Gastrocnemius medialis (tissue), 4 donors: ENCODE measurements at regions of chr6 and their contacts with region 1.

Region 1: GRCh38 chr6:90098001-90098531 is 198.6 kb downstream of the BACH2 start:
- DNase-seq: peak; percentile 60 to 87
- ATAC-seq: peak; percentile 85
- H3K4me3 ChIP-seq: no peak overlapping the region
- H3K27ac ChIP-seq: peak overlapping the region; percentile 62 to 82 (median 70)
- H3K4me1 ChIP-seq: peaks cover 38 to 46% of the 10 kb centered on the region in 2 donors
- H3K27me3 ChIP-seq: no peaks in the 10 kb centered on the region
- CTCF ChIP-seq: peak in 2 of 5 experiments; percentile 31 to 39
- POLR2A ChIP-seq: no peak

Region 2: GRCh38 chr6:89940225-89941027 is 157.6 kb before region 1 on chr6:
- in situ Hi-C with region 1: no loop called
- intact Hi-C with region 1: loop called (anchors 10 kb)
- DNase-seq: peak; percentile 70 to 80
- ATAC-seq: peak; percentile 94 to 95
- H3K4me3 ChIP-seq: no peak overlapping the region
- H3K27ac ChIP-seq: peak overlapping the region; percentile 18 to 60 (median 47)
- H3K4me1 ChIP-seq: peaks cover 25 to 27% of the 10 kb centered on the region in 2 donors
- H3K27me3 ChIP-seq: no peaks in the 10 kb centered on the region
- CTCF ChIP-seq: peak; percentile 63 to 74 (median 73)
- POLR2A ChIP-seq: no peak

Region 3: DNA sequence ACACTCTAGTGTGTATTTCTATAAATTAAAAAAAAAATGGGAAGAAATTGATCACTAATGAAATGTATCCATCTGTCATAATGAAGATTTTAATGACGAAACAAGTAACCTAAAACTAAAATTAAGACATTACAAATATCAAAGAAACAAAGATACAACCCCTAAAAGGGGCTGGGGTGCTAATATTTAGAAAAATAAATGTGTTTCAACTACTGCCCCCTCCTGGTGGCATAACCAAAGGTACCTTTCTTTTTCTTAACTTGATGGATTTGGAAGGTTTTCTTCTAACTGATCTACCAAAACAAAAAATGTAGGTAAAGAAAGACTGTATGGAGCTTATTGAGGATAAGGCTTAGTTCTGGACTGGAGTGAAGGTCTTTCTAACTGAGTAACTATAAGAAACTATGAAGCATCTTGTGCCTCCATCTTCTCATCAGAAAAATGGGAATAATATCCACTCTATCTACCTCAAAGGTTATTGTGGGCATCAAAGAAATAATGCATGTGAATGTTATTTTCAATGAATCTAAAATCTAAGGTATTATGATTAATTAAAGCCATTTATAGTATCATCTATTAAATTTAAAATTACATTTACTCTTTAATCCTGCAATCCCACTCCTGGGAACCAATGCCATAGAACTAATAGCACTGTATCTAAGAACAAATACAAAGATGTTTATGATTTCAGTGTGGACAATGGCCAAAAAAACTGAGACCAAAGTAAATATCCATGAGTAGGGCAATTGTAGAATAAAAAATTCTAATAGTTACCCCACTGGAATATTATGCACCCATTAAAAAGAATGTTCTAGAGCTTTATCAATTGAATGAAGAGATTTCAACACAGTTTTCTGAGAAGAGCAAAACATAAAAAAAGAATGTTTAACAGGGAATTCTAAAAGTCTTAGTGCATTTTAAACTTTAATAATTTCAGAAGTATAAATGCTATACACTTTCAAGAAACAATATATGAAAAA is 81.4 kb after region 1 on chr6:
- in situ Hi-C with region 1: no loop called
- intact Hi-C with region 1: loop called (anchors 5 kb)
- DNase-seq: no peak
- ATAC-seq: no peak
- H3K4me3 ChIP-seq: no peak overlapping the region
- H3K27ac ChIP-seq: no peak overlapping the region
- H3K4me1 ChIP-seq: peaks cover 40% of the 10 kb centered on the region in 2 donors
- H3K27me3 ChIP-seq: no peaks in the 10 kb centered on the region
- CTCF ChIP-seq: peak in 1 of 5 experiments; percentile 31
- POLR2A ChIP-seq: no peak

Region 4: GRCh38 chr6:90216072-90216977 is 118.3 kb after region 1 on chr6:
- in situ Hi-C with region 1: no loop called
- intact Hi-C with region 1: loop called (anchors 1 kb)
- DNase-seq: peak in 1 of 2 donors; percentile 36
- ATAC-seq: no peak
- H3K4me3 ChIP-seq: no peak overlapping the region
- H3K27ac ChIP-seq: peak overlapping the region; percentile 86 to 96 (median 93)
- H3K4me1 ChIP-seq: peaks cover 46 to 73% of the 10 kb centered on the region in 2 donors
- H3K27me3 ChIP-seq: no peaks in the 10 kb centered on the region
- CTCF ChIP-seq: no peak
- POLR2A ChIP-seq: no peak

Region 5: GRCh38 chr6:90296346-90297114 is 198.5 kb after region 1 on chr6 and contains the start of gene BACH2:
- in situ Hi-C with region 1: loop called in 2 of 4 experiments (anchors 5 to 25 kb)
- intact Hi-C with region 1: loop called (anchors 2 kb)
- DNase-seq: peak; percentile 83 to 85
- ATAC-seq: peak; percentile 60 to 67
- H3K4me3 ChIP-seq: peak within 1 kb of the TSS; percentile 70 to 98 (median 88)
- H3K27ac ChIP-seq: peak within 1 kb of the TSS; percentile 84 to 99 (median 94)
- H3K4me1 ChIP-seq: peaks cover 22 to 29% of the 10 kb centered on the region in 2 donors
- H3K27me3 ChIP-seq: no peaks in the 10 kb centered on the region
- CTCF ChIP-seq: peak in 1 of 5 experiments; percentile 45
- POLR2A ChIP-seq: peak; percentile 38 to 65
- total RNA-seq, gene BACH2: 3.6 to 13.4 (median 7.5) TPM

Region 6: DNA sequence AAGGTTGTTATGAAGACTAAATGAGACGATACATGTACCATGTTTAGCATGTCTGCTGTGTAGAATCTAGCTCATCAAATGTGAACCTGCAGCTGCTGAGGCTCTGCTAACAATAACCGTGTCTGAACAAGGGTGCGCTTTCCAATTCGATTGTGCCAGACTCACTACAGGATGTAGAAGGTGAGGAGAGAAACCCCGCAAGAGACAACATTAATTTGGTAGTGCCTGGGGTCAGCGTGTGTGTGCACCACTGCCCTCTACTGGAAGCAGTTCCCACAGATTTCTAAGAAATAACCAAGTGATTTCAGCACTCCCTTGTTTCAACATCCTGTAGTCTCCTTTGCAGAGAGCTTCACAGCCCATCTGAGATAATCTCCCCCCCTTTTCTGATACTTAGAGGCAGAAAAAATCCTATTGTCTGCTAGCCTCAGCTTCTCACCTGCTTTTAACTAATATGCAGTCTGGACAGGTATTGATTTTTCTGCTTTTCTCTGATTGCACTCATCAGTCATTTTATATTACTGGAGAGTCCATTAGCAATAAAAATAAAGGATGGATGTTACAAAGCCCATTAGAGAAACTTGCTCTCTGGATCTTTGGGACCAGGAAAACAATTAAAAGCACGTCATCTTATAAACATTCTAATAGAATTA is 295.3 kb after region 1 on chr6:
- in situ Hi-C with region 1: loop called in 1 of 4 experiments (anchors 10 kb)
- intact Hi-C with region 1: loop called (anchors 5 kb)
- DNase-seq: peak; percentile 28 to 42
- ATAC-seq: peak; percentile 75 to 95
- H3K4me3 ChIP-seq: no peak overlapping the region
- H3K27ac ChIP-seq: no peak overlapping the region
- H3K4me1 ChIP-seq: no peaks in the 10 kb centered on the region
- H3K27me3 ChIP-seq: no peaks in the 10 kb centered on the region
- CTCF ChIP-seq: peak; percentile 70 to 85 (median 79)
- POLR2A ChIP-seq: no peak